ENCODE measurements at regions of chr3 and their contacts with region 1.

Region 1: GRCh38 chr3:157805538-157805937 is 300.7 kb downstream of the SHOX2 start:
- DNase-seq: peak in 1 of 2 experiments; percentile 5
- H3K4me3 ChIP-seq: no peak overlapping the region
- H3K4me3 Mint-ChIP-seq: no peak overlapping the region
- H3K27ac Mint-ChIP-seq: no peak overlapping the region
- H3K4me1 ChIP-seq: peaks cover 6% of the 10 kb centered on the region; the same call in 1 of the 2 replicates
- H3K4me1 Mint-ChIP-seq: no peaks in the 10 kb centered on the region
- H3K27me3 ChIP-seq: no peaks in the 10 kb centered on the region
- H3K27me3 Mint-ChIP-seq: no peaks in the 10 kb centered on the region
- CTCF ChIP-seq: no peak

Region 2: DNA sequence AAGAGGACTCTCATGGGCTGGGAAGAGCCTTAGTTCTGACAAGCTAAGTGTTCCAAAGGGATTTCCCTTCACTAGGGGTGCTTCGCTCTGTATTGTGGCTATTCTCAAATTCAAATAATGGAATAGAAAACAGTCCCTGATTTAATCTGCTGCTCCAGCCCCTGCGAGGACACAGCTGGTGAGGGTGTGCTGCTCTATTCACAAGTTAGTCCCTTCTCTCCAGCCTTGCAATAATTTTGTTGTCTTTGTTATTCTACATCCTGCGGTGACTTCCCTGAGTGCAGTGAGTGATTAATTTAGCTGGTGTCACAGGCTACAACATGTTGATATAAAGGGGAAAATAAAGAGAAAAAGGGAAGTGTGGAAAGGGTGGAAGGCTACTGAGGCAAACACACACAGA is 121.9 kb before region 1 on chr3:
- CTCF ChIA-PET with region 1: no interaction called
- POLR2A ChIA-PET with region 1: no interaction called
- intact Hi-C with region 1: no loop called
- DNase-seq: no peak
- H3K4me3 ChIP-seq: no peak overlapping the region
- H3K4me3 Mint-ChIP-seq: no peak overlapping the region
- H3K27ac Mint-ChIP-seq: no peak overlapping the region
- H3K4me1 ChIP-seq: no peaks in the 10 kb centered on the region
- H3K4me1 Mint-ChIP-seq: no peaks in the 10 kb centered on the region
- H3K27me3 ChIP-seq: no peaks in the 10 kb centered on the region
- H3K27me3 Mint-ChIP-seq: peaks cover 5% of the 10 kb centered on the region
- CTCF ChIP-seq: no peak

Region 3: GRCh38 chr3:157755233-157755632 is 50.3 kb before region 1 on chr3:
- CTCF ChIA-PET with region 1: no interaction called
- POLR2A ChIA-PET with region 1: no interaction called
- intact Hi-C with region 1: loop called (anchors 1 kb)
- DNase-seq: no peak
- H3K4me3 ChIP-seq: no peak overlapping the region
- H3K4me3 Mint-ChIP-seq: no peak overlapping the region
- H3K27ac Mint-ChIP-seq: no peak overlapping the region
- H3K4me1 ChIP-seq: no peaks in the 10 kb centered on the region
- H3K4me1 Mint-ChIP-seq: no peaks in the 10 kb centered on the region
- H3K27me3 ChIP-seq: no peaks in the 10 kb centered on the region; the same call in 1 of the 2 replicates
- H3K27me3 Mint-ChIP-seq: peaks cover 7% of the 10 kb centered on the region
- CTCF ChIP-seq: no peak